ENCODE measurements at regions of chr20 and their contacts with region 1.

Region 1: GRCh38 chr20:1734269-1734858 is 76.8 kb upstream of the SIRPG start:
- DNase-seq: peak in 6 of 9 donors; percentile 17 to 56 (median 46)
- ATAC-seq: peak; percentile 82
- H3K4me3 ChIP-seq: no peak overlapping the region
- H3K4me3 Mint-ChIP-seq: peak overlapping the region in 6 of 10 donors; percentile 23 to 57 (median 40)
- H3K27ac ChIP-seq: no peak overlapping the region
- H3K27ac Mint-ChIP-seq: peak overlapping the region in 6 of 9 donors; percentile 28 to 75 (median 62)
- H3K4me1 ChIP-seq: peaks cover 0 to 29% of the 10 kb centered on the region in 2 donors
- H3K4me1 Mint-ChIP-seq: peaks cover 0 to 36% (median 11%) of the 10 kb centered on the region in 7 donors
- H3K27me3 ChIP-seq: no peaks in the 10 kb centered on the region
- H3K27me3 Mint-ChIP-seq: peaks cover 0 to 9% (median 4%) of the 10 kb centered on the region in 5 donors

Region 2: DNA sequence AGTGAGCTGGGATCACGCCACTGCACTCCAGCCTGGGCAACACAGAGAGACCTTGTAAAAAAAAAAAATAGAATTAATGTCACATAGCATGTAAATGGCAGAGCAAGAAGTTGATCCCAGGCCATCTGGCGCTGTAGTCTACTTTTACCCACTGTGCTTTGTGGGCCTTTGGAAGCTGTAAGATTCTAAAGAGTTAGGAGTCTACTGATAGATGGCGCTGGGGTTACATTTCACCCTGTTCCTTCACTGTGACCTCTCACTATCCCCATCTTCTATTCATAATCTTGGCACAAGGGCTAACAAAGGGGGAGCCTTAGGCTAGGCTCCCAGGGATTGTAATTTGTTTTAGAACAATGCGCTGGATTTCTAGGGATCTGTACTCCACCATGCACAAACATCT is 201.3 kb before region 1 on chr20:
- CTCF ChIA-PET with region 1: interaction called, 10 read pairs
- POLR2A ChIA-PET with region 1: no interaction called
- intact Hi-C with region 1: loop called (anchors 1 to 2 kb)
- DNase-seq: peak in 5 of 9 donors; percentile 13 to 30 (median 15)
- ATAC-seq: no peak
- H3K4me3 ChIP-seq: no peak overlapping the region
- H3K4me3 Mint-ChIP-seq: no peak overlapping the region
- H3K27ac ChIP-seq: no peak overlapping the region
- H3K27ac Mint-ChIP-seq: peak overlapping the region in 1 of 9 donors; percentile 38
- H3K4me1 ChIP-seq: no peaks in the 10 kb centered on the region
- H3K4me1 Mint-ChIP-seq: peaks cover 0 to 12% (median 10%) of the 10 kb centered on the region in 7 donors
- H3K27me3 ChIP-seq: no peaks in the 10 kb centered on the region
- H3K27me3 Mint-ChIP-seq: peaks cover 0 to 8% (median 0%) of the 10 kb centered on the region in 5 donors

Region 3: DNA sequence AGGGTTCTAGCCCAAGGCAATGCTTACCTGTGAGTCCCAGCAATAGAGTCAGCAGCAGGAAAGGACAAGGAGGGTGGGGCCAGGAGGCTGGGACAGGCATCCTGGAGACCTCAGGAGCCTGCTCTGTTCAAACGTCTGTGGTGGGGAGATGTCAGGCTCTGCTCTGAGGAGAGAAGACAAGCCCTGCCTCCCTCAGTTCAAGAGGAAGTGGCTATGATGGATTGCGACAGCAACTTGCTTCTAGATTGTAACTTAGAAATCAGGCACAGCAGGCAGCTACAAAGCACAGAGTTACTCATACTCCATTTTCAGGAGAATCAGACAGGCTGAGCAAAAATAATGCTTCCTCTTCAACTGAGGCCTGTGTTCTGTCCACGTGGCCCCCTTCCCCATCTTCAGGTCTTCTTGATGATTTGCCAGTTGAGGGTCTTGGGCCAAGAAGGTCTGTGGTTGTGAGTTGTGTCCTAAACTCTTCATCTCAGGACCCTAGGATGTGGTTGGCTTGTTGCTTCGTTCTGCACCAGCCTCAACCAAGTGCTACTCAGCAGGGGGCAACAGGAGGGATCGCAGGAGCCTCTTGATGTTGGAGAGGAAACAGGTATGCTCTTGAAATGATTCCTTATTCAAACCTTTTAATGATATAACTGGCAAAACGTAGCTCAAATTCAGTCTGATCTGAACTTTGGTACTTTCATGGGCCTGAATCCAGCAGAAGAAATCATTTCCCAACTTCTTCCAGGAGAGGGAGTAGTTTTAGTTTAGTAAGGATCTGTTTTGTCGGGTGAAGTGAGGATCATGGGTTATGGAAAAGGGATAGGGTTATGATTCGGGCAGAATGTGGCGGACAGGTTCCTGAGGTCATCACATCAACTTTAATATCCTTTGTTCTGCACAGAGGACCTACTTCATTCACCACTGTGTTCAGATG is 145.6 kb before region 1 on chr20:
- CTCF ChIA-PET with region 1: interaction called, 3 read pairs
- POLR2A ChIA-PET with region 1: no interaction called
- intact Hi-C with region 1: loop called in 1 of 2 experiments (anchors 2 kb)
- DNase-seq: peak in 3 of 9 donors; percentile 23 to 64 (median 56)
- ATAC-seq: no peak
- H3K4me3 ChIP-seq: no peak overlapping the region
- H3K4me3 Mint-ChIP-seq: peak overlapping the region in 4 of 10 donors; percentile 67 to 76 (median 70)
- H3K27ac ChIP-seq: no peak overlapping the region
- H3K27ac Mint-ChIP-seq: peak overlapping the region in 3 of 9 donors; percentile 88 to 91 (median 90)
- H3K4me1 ChIP-seq: peaks cover 0 to 5% of the 10 kb centered on the region in 2 donors
- H3K4me1 Mint-ChIP-seq: peaks cover 0 to 41% (median 0%) of the 10 kb centered on the region in 7 donors
- H3K27me3 ChIP-seq: no peaks in the 10 kb centered on the region
- H3K27me3 Mint-ChIP-seq: no peaks in the 10 kb centered on the region

Region 4: GRCh38 chr20:1663917-1664316 is 70.4 kb before region 1 on chr20:
- CTCF ChIA-PET with region 1: interaction called, 21 read pairs
- POLR2A ChIA-PET with region 1: interaction called, 7 read pairs
- intact Hi-C with region 1: loop called in 1 of 2 experiments (anchors 5 kb)
- DNase-seq: peak in 1 of 9 donors; percentile 29
- ATAC-seq: peak; percentile 53
- H3K4me3 ChIP-seq: peak overlapping the region; percentile 57
- H3K4me3 Mint-ChIP-seq: peak overlapping the region; percentile 69 to 96 (median 84)
- H3K27ac ChIP-seq: peak overlapping the region; percentile 70
- H3K27ac Mint-ChIP-seq: peak overlapping the region; percentile 70 to 98 (median 91)
- H3K4me1 ChIP-seq: peaks cover 83 to 89% of the 10 kb centered on the region in 2 donors
- H3K4me1 Mint-ChIP-seq: peaks cover 80 to 100% (median 92%) of the 10 kb centered on the region in 7 donors
- H3K27me3 ChIP-seq: no peaks in the 10 kb centered on the region
- H3K27me3 Mint-ChIP-seq: no peaks in the 10 kb centered on the region

Region 5: GRCh38 chr20:1707588-1708449 is 26.5 kb before region 1 on chr20:
- CTCF ChIA-PET with region 1: interaction called, 13 read pairs
- POLR2A ChIA-PET with region 1: no interaction called
- intact Hi-C with region 1: no loop called
- DNase-seq: peak in 5 of 9 donors; percentile 22 to 46 (median 37)
- ATAC-seq: peak; percentile 54
- H3K4me3 ChIP-seq: no peak overlapping the region
- H3K4me3 Mint-ChIP-seq: peak overlapping the region; percentile 9 to 89 (median 73)
- H3K27ac ChIP-seq: peak overlapping the region; percentile 54
- H3K27ac Mint-ChIP-seq: peak overlapping the region; percentile 68 to 96 (median 91)
- H3K4me1 ChIP-seq: peaks cover 0 to 17% of the 10 kb centered on the region in 2 donors
- H3K4me1 Mint-ChIP-seq: peaks cover 15 to 36% (median 33%) of the 10 kb centered on the region in 7 donors
- H3K27me3 ChIP-seq: no peaks in the 10 kb centered on the region
- H3K27me3 Mint-ChIP-seq: no peaks in the 10 kb centered on the region

Region 6: GRCh38 chr20:2065099-2065498 is 330.7 kb after region 1 on chr20:
- CTCF ChIA-PET with region 1: no interaction called
- POLR2A ChIA-PET with region 1: no interaction called
- intact Hi-C with region 1: no loop called
- DNase-seq: no peak
- ATAC-seq: no peak
- H3K4me3 ChIP-seq: no peak overlapping the region
- H3K4me3 Mint-ChIP-seq: no peak overlapping the region
- H3K27ac ChIP-seq: no peak overlapping the region
- H3K27ac Mint-ChIP-seq: no peak overlapping the region
- H3K4me1 ChIP-seq: no peaks in the 10 kb centered on the region
- H3K4me1 Mint-ChIP-seq: no peaks in the 10 kb centered on the region
- H3K27me3 ChIP-seq: peaks cover 0 to 3% of the 10 kb centered on the region in 2 donors
- H3K27me3 Mint-ChIP-seq: peaks cover 13 to 50% (median 45%) of the 10 kb centered on the region in 5 donors

Measured in naive thymus-derived CD4-positive, alpha-beta T cell (primary cell).